Vagina (tissue), 2 donors: ENCODE measurements at regions of chr20 and their contacts with region 1.

Region 1: DNA sequence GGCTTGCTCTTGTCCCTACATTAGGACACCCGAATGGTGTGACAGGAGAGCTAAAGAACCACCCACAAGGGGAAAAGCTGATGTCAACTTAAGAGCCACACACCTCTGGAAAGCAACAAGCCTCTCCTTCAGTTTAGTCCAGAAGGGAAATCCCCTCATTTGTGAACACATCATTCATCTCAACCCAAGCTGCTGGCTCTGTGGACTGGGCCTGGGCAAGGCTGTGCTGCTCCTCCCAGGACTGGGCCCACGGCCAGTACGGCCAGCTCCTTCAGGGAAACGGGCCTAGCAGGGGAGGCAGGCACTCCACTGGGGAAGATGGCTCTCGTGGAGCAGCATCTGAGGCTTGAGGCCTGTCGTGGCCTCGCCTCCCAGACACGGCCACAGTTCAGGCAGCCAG is 12.8 kb upstream of the SLC4A11 start:
- DNase-seq: no peak
- H3K4me3 ChIP-seq: no peak overlapping the region
- H3K27ac ChIP-seq: no peak overlapping the region
- H3K4me1 ChIP-seq: peaks cover 14% of the 10 kb centered on the region
- H3K27me3 ChIP-seq: no peaks in the 10 kb centered on the region
- CTCF ChIP-seq: no peak
- POLR2A ChIP-seq: no peak

Region 2: DNA sequence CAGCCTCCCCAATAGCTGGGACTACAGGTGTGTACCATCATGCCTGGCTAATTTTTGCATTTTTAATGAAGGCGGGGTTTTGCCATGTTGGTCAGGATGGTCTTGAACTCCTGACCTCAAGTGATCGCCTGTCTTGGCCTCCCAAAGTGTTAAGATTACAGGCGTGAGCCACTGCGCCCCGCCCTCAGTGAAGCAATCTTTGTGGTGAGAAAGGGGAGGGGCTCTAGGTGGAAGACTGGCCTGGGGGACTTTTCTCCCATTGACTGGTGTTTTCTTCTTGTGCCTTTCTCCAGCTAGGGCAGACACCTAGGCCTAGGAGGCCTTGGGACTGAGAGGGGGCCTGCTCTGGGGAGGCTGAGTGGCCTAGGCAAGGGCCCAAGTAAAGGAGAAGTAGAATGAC is 71.6 kb after region 1 on chr20:
- intact Hi-C with region 1: loop called (anchors 2 kb)
- DNase-seq: no peak
- H3K4me3 ChIP-seq: no peak overlapping the region
- H3K27ac ChIP-seq: no peak overlapping the region
- H3K4me1 ChIP-seq: peaks cover 8% of the 10 kb centered on the region
- H3K27me3 ChIP-seq: no peaks in the 10 kb centered on the region
- CTCF ChIP-seq: no peak
- POLR2A ChIP-seq: no peak